ENCODE measurements at regions of chr6 and their contacts with region 1.

Region 1: GRCh38 chr6:159042003-159042825 is 2.6 kb downstream of the TAGAP start:
- DNase-seq: peak; percentile 75
- H3K4me3 ChIP-seq: peak overlapping the region in 1 of 4 donors; percentile 29
- H3K27ac ChIP-seq: peak overlapping the region in 2 of 4 donors; percentile 24 to 51
- H3K4me1 ChIP-seq: peaks cover 0 to 10% (median 0%) of the 10 kb centered on the region in 4 donors
- H3K27me3 ChIP-seq: peaks cover 0 to 6% (median 0%) of the 10 kb centered on the region in 3 donors
- CTCF ChIP-seq: peak; percentile 67 to 93 (median 82)
- EP300 ChIP-seq: no peak
- POLR2A ChIP-seq: no peak

Region 2: DNA sequence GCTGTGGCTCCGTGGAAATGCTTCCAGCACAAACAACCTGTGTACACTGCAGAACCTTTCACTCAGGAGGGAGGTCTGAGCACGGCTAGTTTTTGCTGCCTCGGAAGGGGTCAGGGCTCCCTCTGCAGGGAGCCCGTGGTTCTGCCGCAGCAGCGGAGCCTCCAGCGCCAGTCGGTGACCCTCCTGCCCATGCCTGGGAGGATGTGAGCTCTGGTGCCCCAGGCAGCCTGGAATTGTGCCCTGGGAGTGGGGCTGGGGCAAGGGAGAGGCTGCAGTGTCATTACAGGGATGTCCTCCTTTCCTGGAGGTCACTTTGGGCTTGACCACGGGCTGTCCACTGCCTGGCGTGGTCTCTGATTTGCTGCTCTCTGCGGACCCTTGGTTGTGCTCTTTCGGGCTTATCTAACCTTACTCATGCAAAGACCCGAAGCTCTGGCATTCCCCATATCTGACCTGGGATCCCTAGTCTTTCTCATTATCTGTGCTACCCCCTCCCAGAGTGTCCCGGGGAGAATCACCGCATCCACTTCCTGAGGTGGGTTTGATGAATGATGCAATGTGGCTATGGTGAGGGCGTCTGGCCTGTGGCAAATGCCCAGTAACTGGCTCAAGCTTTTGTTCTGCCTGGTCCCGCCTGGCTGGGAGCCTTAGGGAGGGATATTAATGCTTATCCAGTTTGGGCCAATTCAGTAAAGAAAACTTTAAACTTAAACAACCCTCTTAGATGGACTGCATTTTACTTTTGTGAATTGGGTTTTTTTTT is 62.1 kb after region 1 on chr6:
- intact Hi-C with region 1: loop called (anchors 1 kb)
- DNase-seq: peak; percentile 75
- H3K4me3 ChIP-seq: no peak overlapping the region
- H3K27ac ChIP-seq: no peak overlapping the region
- H3K4me1 ChIP-seq: peaks cover 0 to 6% (median 2%) of the 10 kb centered on the region in 4 donors
- H3K27me3 ChIP-seq: no peaks in the 10 kb centered on the region
- CTCF ChIP-seq: peak; percentile 31 to 80 (median 71)
- EP300 ChIP-seq: no peak
- POLR2A ChIP-seq: no peak

Region 3: GRCh38 chr6:159134701-159135364 is 92.6 kb after region 1 on chr6:
- intact Hi-C with region 1: loop called (anchors 1 kb)
- DNase-seq: no peak
- H3K4me3 ChIP-seq: no peak overlapping the region
- H3K27ac ChIP-seq: no peak overlapping the region
- H3K4me1 ChIP-seq: no peaks in the 10 kb centered on the region
- H3K27me3 ChIP-seq: no peaks in the 10 kb centered on the region
- CTCF ChIP-seq: peak; percentile 34 to 88 (median 72)
- EP300 ChIP-seq: no peak
- POLR2A ChIP-seq: no peak